A549 (cell line): ENCODE measurements at regions of chr15 and their contacts with region 1.

Region 1: GRCh38 chr15:72722071-72722696 is 36.2 kb downstream of the BBS4 start:
- DNase-seq: peak; percentile 57 to 80
- ATAC-seq: peak; percentile 84 to 90; a peak in 5 of 6 replicates
- H3K4me3 ChIP-seq: no peak overlapping the region
- H3K27ac ChIP-seq: no peak overlapping the region
- H3K4me1 ChIP-seq: no peaks in the 10 kb centered on the region
- CTCF ChIP-seq: peak; percentile 94
- EP300 ChIP-seq: no peak
- POLR2A ChIP-seq: no peak
- RAD21 ChIP-seq: peak; percentile 73 to 74

Region 2: GRCh38 chr15:72358650-72359288 is 363.4 kb before region 1 on chr15:
- CTCF ChIA-PET with region 1: no interaction called
- POLR2A ChIA-PET with region 1: no interaction called
- DNase-seq: no peak
- ATAC-seq: peak in 1 of 2 experiments; percentile 36; a peak in 1 of 6 replicates
- H3K4me3 ChIP-seq: no peak overlapping the region
- H3K27ac ChIP-seq: no peak overlapping the region
- H3K4me1 ChIP-seq: no peaks in the 10 kb centered on the region
- CTCF ChIP-seq: no peak
- EP300 ChIP-seq: no peak
- POLR2A ChIP-seq: no peak
- RAD21 ChIP-seq: no peak

Region 3: DNA sequence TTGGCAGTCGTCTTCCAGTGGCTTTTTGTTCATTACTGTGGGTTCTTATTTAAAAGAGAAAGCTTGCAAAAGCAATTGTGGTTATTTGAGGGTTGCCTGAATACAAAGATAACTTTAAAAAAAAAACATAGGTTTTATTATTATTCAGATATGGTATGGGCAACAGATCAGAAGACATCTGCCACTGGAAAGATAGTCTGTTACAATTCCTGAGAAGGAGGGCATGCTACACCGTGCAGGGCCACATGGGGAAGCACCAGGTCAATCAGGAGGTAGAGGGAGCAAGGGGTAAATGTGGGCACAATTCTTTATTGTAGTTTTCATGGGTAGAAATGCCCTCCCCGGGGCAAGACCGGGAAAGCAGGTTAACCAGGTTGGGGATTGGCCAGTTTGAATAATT is 10.3 kb after region 1 on chr15:
- CTCF ChIA-PET with region 1: interaction called, 71 read pairs
- POLR2A ChIA-PET with region 1: no interaction called
- DNase-seq: no peak
- ATAC-seq: peak; percentile 63 to 76; a peak in 5 of 6 replicates
- H3K4me3 ChIP-seq: no peak overlapping the region
- H3K27ac ChIP-seq: no peak overlapping the region
- H3K4me1 ChIP-seq: no peaks in the 10 kb centered on the region
- CTCF ChIP-seq: no peak
- EP300 ChIP-seq: no peak
- POLR2A ChIP-seq: no peak
- RAD21 ChIP-seq: no peak

Region 4: DNA sequence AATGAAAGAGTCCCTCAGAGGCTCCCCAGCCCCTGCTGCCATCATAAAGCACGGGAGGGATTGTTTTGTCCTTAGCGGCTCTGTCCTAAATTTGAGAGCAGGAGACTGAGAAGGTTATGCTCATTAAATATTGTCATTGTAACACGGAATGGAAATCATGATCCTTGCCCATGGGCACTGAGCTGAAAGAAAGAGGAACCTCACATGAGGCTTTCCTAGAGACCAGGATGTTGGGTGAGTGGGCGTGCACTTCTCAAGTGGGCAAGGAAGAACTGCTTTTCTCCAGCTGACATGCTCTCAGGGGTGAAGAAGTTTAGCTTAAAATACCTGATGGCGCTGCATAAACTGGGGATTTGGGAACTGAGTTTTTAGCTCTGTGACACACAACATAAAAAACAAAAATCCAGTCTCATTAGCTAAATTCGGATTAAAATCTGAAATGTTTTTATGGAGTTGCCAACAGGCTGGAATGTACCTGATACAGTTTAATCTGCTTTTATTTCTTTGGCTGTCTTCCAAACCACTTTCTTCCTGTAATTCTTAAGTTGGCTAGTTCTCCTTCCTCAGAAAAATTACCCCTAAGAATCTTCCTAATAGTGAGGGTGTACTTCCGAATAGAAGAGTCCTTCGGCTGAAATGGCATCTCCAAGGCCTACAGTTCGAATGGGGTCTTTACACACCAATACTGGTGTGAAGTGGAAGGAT is 29.7 kb after region 1 on chr15:
- CTCF ChIA-PET with region 1: interaction called, 18 read pairs
- POLR2A ChIA-PET with region 1: no interaction called
- DNase-seq: no peak
- ATAC-seq: no peak
- H3K4me3 ChIP-seq: no peak overlapping the region
- H3K27ac ChIP-seq: no peak overlapping the region
- H3K4me1 ChIP-seq: no peaks in the 10 kb centered on the region
- CTCF ChIP-seq: no peak
- EP300 ChIP-seq: no peak
- POLR2A ChIP-seq: no peak
- RAD21 ChIP-seq: no peak

Region 5: DNA sequence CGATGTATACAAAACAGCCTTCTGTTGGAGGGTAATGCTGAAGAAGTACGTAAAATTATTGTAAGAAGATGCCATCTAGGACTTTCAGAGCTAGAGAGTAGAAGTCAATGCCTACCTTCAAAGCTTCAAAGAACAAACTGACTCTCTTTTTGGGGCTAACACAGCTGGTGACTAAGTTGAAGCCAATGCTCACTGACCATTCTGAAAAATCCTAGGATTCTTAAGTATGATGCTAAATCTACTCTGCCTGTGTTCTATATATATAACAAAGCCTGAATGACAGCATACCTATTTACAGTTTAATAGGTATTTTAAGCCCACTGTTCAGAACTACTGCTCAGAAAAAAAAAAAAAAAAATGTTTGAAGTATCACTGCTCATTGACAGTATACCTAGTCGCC is 42.5 kb after region 1 on chr15:
- CTCF ChIA-PET with region 1: interaction called, 12 read pairs
- POLR2A ChIA-PET with region 1: no interaction called
- DNase-seq: no peak
- ATAC-seq: no peak
- H3K4me3 ChIP-seq: no peak overlapping the region
- H3K27ac ChIP-seq: no peak overlapping the region
- H3K4me1 ChIP-seq: no peaks in the 10 kb centered on the region
- CTCF ChIP-seq: no peak
- EP300 ChIP-seq: no peak
- POLR2A ChIP-seq: no peak
- RAD21 ChIP-seq: no peak